GM10248 (cell line): ENCODE measurements at regions of chr15 and their contacts with region 1.

Region 1: DNA sequence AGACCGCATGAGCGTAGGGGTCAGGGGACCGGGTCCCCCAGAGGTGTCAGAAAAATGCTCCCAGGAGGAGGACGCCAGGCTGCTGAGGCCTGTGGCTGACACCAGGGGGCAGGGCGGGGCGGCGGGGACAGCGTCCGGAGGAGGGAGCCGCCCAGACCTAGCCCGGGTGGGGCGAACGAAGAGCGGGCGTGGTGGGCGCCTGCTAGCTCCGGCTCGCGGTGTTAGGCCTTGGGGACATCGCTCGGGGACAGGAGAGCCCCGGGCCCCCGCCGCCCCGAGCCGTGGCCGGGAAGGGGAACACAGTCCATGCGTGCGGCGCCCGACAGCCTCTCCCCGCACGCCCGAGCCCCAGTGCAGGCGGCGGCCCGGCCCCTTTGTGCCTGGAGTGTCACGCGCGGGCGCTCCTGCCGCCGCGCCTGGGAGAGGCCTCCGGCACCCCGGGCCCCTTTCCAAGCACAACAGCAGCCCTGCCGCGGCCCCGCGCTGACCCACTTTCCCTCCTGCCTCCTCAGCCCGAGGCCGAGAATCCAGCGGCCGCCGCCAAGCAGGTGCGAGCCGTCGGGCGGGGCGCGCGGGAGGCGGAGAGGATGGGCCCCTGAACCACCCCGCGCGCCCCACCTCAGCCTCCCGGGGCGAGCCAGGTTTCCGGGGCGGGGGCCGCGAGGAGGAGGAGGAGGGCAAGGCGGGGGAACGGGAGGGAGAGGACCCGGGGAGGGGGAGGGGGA is 111.0 kb upstream of the KLF13 start:
- DNase-seq: peak; percentile 91
- CTCF ChIP-seq: peak; percentile 94

Region 2: GRCh38 chr15:31231150-31231485 is 15.5 kb after region 1 on chr15:
- CTCF ChIA-PET with region 1: interaction called, 21 read pairs
- POLR2A ChIA-PET with region 1: no interaction called
- DNase-seq: no peak
- CTCF ChIP-seq: no peak

Region 3: GRCh38 chr15:31265871-31266711 is 50.4 kb after region 1 on chr15:
- CTCF ChIA-PET with region 1: interaction called, 17 read pairs
- POLR2A ChIA-PET with region 1: no interaction called
- DNase-seq: peak; percentile 84
- CTCF ChIP-seq: no peak

Region 4: DNA sequence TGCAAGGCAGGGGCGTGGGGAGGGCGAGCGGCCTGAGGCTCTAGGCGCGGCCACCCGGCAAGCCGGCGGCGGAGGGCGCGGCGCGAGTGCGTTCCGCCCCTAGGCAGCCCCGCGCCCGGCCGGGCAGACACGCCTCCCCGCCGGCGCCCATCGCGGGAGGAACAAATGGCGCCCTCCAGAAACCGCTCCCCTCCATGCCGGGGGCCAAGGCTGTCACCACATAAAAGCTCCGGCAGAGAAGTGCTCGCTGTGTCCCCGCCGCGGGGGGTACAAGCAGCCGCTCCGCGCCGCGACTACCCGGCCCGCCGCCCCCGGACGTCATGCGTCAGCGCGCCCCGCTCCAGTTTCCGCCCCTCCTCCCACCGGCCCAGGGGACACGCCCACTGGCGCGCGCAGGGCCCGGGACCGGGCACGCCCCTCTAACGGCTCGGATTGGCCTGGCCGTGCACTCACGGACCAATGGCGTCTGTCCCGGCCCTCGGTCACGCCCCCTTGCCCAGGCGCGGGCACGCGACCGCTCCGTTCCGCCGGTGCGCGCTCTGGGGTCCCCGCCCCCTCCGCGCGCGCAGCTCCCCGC is 110.6 kb after region 1 on chr15:
- CTCF ChIA-PET with region 1: interaction called, 16 read pairs
- POLR2A ChIA-PET with region 1: interaction called, 4 read pairs
- DNase-seq: peak; percentile 98
- CTCF ChIP-seq: no peak

Region 5: DNA sequence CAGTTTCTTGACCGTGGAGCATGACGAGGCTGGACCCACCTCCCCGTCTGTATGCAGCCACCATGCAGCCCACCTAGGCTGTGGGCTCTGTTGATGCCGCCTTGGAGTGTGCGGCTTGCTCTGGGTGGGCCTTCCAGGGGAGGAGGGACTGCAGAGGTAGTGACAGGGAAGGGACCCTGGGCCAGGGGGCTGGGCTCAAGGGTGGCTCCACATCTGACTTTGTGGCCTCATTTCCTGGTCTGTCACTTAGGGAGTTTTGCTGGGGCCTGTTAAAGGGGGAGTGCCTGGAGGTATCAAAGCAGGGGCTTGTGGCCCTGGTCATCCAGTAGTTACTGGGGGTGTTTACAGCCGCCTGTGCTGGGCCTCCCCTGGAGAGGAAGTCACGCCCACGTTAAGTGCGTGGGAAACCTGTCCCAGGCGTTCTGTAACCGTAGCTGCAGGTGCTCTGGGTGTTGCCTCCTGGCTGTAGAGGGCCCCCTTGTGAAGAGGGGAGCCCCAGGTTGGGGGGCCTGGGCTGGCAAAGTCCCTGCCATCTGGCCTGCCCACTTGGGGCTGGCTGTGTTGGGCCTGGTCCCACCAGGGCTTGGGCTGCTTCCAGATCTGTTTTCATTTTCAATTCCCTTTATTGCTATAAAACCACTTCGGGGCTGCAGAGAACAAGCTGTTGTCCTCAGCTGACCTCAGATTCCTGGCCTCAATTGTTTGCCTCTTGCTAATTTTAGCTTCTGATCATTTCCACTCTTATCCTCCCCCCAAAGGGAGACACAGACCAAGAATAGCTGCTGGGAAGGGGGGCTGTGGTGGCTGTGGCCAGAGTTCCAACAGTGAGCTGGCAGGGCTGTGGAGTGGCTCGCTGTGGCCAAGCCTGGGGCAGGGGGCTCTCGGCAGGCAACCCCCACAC is 137.5 kb after region 1 on chr15:
- CTCF ChIA-PET with region 1: interaction called, 16 read pairs
- POLR2A ChIA-PET with region 1: no interaction called
- DNase-seq: peak; percentile 89
- CTCF ChIP-seq: peak; percentile 36

Region 6: GRCh38 chr15:31435261-31435911 is 219.7 kb after region 1 on chr15:
- CTCF ChIA-PET with region 1: interaction called, 24 read pairs
- POLR2A ChIA-PET with region 1: no interaction called
- DNase-seq: peak; percentile 84
- CTCF ChIP-seq: peak; percentile 91